ENCODE measurements at regions of chr11 and their contacts with region 1.

Region 1: DNA sequence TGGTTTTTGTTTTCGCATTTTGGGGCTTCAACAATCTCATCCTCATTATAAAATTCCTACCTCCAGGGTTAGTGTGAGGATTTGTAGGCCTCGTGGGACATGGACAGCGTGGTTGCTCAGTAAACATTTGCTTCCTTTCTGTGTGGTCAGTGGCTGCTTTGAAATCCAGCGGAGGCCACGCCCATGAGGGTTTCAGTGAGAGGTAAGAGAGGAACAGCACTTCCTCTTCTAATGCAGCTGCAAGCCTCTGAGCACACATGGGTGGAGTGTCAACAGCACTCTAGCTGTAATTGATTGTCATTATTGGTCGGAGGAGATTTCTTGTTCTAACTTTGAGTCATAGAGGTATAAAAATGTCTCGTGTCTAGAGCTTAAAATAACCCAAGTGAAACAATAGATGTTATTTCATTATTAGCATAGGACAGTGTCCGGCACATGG is 6.0 kb upstream of the ARHGAP42 start:
- DNase-seq: peak; percentile 29 to 57
- ATAC-seq: peak; percentile 15 to 56
- H3K4me3 ChIP-seq: no peak overlapping the region
- H3K27ac ChIP-seq: peak overlapping the region in 3 of 4 donors; percentile 41 to 45 (median 43)
- H3K4me1 ChIP-seq: peaks cover 4 to 21% of the 10 kb centered on the region in 2 donors
- H3K27me3 ChIP-seq: no peaks in the 10 kb centered on the region
- CTCF ChIP-seq: no peak
- POLR2A ChIP-seq: no peak

Region 2: GRCh38 chr11:100753172-100753543 is 72.1 kb after region 1 on chr11:
- in situ Hi-C with region 1: no loop called
- intact Hi-C with region 1: no loop called
- DNase-seq: no peak
- ATAC-seq: no peak
- H3K4me3 ChIP-seq: no peak overlapping the region
- H3K27ac ChIP-seq: no peak overlapping the region
- H3K4me1 ChIP-seq: peaks cover 0 to 7% of the 10 kb centered on the region in 2 donors
- H3K27me3 ChIP-seq: no peaks in the 10 kb centered on the region
- CTCF ChIP-seq: no peak
- POLR2A ChIP-seq: no peak

Region 3: DNA sequence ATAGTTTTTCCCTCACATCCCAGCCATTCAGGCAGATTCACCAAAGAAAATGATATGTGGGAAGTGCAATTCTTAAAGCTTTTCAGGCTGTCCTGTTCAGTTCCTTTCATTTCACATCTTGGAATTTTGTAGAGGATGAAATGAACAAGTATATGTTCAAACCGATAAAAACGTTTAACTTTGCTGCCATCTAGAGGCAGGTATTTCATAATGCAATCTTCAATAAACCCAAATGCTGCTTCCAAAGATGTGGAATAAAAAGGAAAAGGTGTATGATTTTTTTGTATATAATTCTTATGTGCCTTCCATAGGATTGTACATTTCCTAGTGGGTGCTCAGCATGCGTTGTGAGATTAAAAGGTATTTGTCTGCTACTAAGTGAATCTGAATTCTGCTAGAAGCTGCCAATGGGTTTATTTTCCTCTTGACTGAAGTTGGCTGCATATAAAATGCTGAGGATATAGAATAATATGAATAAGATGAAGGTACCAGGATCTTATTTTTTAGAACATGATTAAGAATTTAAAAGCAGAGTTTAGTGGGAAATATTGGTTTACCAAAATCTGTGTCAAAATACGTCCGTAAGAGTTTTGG is 249.2 kb after region 1 on chr11:
- in situ Hi-C with region 1: loop called in 1 of 4 experiments (anchors 5 kb)
- intact Hi-C with region 1: loop called (anchors 5 kb)
- DNase-seq: no peak
- ATAC-seq: peak; percentile 47 to 61
- H3K4me3 ChIP-seq: no peak overlapping the region
- H3K27ac ChIP-seq: no peak overlapping the region
- H3K4me1 ChIP-seq: no peaks in the 10 kb centered on the region
- H3K27me3 ChIP-seq: no peaks in the 10 kb centered on the region
- CTCF ChIP-seq: peak; percentile 46 to 65 (median 51)
- POLR2A ChIP-seq: no peak

Measured in gastrocnemius medialis (tissue), 4 donors.